Transverse colon (tissue), 4 donors: ENCODE measurements at regions of chr14 and their contacts with region 1.

Region 1: GRCh38 chr14:74608959-74609611 is 3.0 kb downstream of the LTBP2 start:
- DNase-seq: peak; percentile 87
- H3K4me3 ChIP-seq: no peak overlapping the region
- H3K27ac ChIP-seq: no peak overlapping the region
- H3K4me1 ChIP-seq: peaks cover 0 to 22% (median 17%) of the 10 kb centered on the region in 4 donors
- H3K27me3 ChIP-seq: peaks cover 18% of the 10 kb centered on the region
- CTCF ChIP-seq: peak; percentile 97 to 99 (median 98)
- EP300 ChIP-seq: no peak
- POLR2A ChIP-seq: no peak

Region 2: GRCh38 chr14:74501135-74501614 is 107.9 kb before region 1 on chr14:
- in situ Hi-C with region 1: no loop called
- intact Hi-C with region 1: loop called (anchors 5 kb)
- DNase-seq: peak; percentile 46
- H3K4me3 ChIP-seq: no peak overlapping the region
- H3K27ac ChIP-seq: no peak overlapping the region
- H3K4me1 ChIP-seq: no peaks in the 10 kb centered on the region
- H3K27me3 ChIP-seq: no peaks in the 10 kb centered on the region
- CTCF ChIP-seq: peak; percentile 15 to 50 (median 36)
- EP300 ChIP-seq: no peak
- POLR2A ChIP-seq: no peak

Region 3: GRCh38 chr14:74793506-74794168 is 184.6 kb after region 1 on chr14:
- in situ Hi-C with region 1: loop called in 1 of 4 experiments (anchors 10 kb)
- intact Hi-C with region 1: no loop called
- DNase-seq: no peak
- H3K4me3 ChIP-seq: no peak overlapping the region
- H3K27ac ChIP-seq: no peak overlapping the region
- H3K4me1 ChIP-seq: peaks cover 0 to 22% (median 3%) of the 10 kb centered on the region in 4 donors
- H3K27me3 ChIP-seq: no peaks in the 10 kb centered on the region
- CTCF ChIP-seq: peak in 1 of 5 experiments; percentile 18
- EP300 ChIP-seq: no peak
- POLR2A ChIP-seq: no peak